Panc1 (cell line): ENCODE measurements at regions of chr22 and their contacts with region 1.

Region 1: GRCh38 chr22:22883090-22883727 is 4.4 kb upstream of the IGLL5 start:
- DNase-seq: no peak
- ATAC-seq: no peak
- H3K4me3 ChIP-seq: no peak overlapping the region
- H3K27ac ChIP-seq: no peak overlapping the region
- H3K4me1 ChIP-seq: no peaks in the 10 kb centered on the region
- H3K27me3 ChIP-seq: no peaks in the 10 kb centered on the region
- CTCF ChIP-seq: no peak

Region 2: DNA sequence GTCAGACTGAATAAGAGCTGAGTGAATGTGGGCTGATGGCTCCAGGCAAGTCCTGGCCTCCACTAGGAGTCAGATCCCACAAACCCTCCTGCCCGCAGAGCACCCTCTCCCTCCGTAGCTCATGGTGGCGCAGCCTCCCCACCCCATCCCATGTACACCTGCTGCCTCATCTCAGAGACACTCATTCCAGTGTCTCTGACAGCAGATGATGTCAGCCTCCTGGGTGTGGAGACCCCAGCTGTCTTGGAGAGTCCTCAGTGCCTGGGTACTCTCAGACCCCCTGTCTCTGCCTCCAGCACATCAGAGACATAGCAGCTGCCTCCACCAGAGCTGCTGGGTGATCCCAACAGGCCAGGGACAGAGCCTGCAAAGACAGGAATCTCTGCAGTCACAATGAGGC is 13.9 kb after region 1 on chr22:
- CTCF ChIA-PET with region 1: interaction called, 12 read pairs
- POLR2A ChIA-PET with region 1: no interaction called
- in situ Hi-C with region 1: no loop called
- intact Hi-C with region 1: no loop called
- DNase-seq: no peak
- ATAC-seq: no peak
- H3K4me3 ChIP-seq: no peak overlapping the region
- H3K27ac ChIP-seq: no peak overlapping the region
- H3K4me1 ChIP-seq: no peaks in the 10 kb centered on the region
- H3K27me3 ChIP-seq: no peaks in the 10 kb centered on the region
- CTCF ChIP-seq: no peak

Region 3: DNA sequence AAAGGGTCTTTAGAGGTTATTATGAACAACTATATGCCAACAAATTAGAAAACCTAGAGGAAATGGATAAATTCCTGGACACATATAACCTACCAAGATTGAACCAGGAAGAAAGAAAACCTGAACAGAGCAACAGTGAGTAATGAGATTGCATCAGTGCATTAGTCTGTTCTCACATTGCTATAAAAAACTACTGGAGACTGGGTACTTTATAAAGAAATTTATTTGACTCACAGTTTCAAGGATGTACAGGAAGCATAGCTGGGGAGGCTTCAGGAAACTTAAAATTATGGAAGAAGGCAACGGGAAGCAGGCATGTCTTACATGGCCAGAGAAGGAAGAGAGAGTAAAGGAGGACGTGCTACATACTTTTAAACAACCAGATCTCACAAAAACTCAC is 116.3 kb after region 1 on chr22:
- CTCF ChIA-PET with region 1: no interaction called
- POLR2A ChIA-PET with region 1: no interaction called
- in situ Hi-C with region 1: no loop called
- intact Hi-C with region 1: no loop called
- DNase-seq: no peak
- ATAC-seq: no peak
- H3K4me3 ChIP-seq: no peak overlapping the region
- H3K27ac ChIP-seq: no peak overlapping the region
- H3K4me1 ChIP-seq: no peaks in the 10 kb centered on the region
- H3K27me3 ChIP-seq: no peaks in the 10 kb centered on the region
- CTCF ChIP-seq: no peak